Activated CD8-positive, alpha-beta memory T cell treated with anti-CD3 and anti-CD28 coated beads, Interleukin-2, amount 10 ng/mL, durations not matched to agents 7 days and 5 days (primary cell): ENCODE measurements at regions of chr13 and their contacts with region 1.

Region 1: DNA sequence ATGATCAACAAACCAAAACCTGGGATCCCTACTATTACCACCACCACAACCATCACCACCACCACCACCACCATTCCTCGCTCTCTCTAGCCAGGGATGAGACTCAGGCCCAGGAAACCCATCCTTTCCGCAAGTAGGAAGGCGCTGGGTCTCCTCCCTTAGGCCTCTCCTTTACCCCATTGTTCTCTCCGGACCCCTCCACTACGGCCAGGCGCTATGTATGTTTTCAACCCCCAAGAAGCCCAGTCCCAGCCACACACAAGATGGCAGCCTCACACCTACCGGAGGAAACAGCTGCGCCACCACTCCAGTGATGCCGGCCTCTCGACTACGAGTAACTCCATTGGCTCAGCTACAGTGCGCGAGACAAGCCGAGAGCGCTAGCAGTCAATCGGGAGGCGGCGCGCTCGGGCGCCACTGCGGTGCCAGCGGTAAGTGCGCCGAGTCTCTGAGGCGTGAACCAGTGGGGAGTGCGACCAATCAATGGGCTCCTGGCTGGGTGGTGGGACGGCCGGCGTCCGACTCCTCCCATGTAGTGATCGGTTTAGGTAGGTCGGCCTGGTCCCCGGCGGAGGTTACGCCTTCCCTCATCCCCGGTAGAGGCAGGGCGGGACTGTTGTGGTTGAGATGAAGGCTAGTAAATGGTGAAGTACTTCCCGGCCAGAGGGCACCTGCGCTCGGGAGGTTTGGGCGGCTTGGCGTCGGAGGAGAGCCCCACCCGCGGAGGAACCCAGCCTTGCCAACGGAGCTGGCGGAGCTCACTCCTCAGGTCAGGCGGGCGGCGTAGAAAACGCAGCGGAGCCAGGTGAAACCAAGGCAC is at the starts of genes CAB39L and SETDB2:
- DNase-seq: peak; percentile 100
- ATAC-seq: peak; percentile 94
- H3K4me3 Mint-ChIP-seq: peak within 1 kb of the TSS; percentile 97
- H3K27ac Mint-ChIP-seq: peak within 1 kb of the TSS; percentile 98
- H3K4me1 Mint-ChIP-seq: peaks cover 47% of the 10 kb centered on the region
- H3K27me3 Mint-ChIP-seq: no peaks in the 10 kb centered on the region
- total RNA-seq, gene CAB39L: 4.0 to 4.3 TPM
- total RNA-seq, gene SETDB2: 14.3 to 18.0 TPM

Region 2: GRCh38 chr13:48828962-48829421 is 614.9 kb before region 1 on chr13:
- CTCF ChIA-PET with region 1: no interaction called
- DNase-seq: no peak
- ATAC-seq: peak; percentile 47
- H3K4me3 Mint-ChIP-seq: no peak overlapping the region
- H3K27ac Mint-ChIP-seq: no peak overlapping the region
- H3K4me1 Mint-ChIP-seq: peaks cover 21% of the 10 kb centered on the region
- H3K27me3 Mint-ChIP-seq: no peaks in the 10 kb centered on the region

Region 3: GRCh38 chr13:49454388-49455006 is 10.6 kb after region 1 on chr13:
- CTCF ChIA-PET with region 1: interaction called, 23 read pairs
- DNase-seq: no peak
- ATAC-seq: peak; percentile 95
- H3K4me3 Mint-ChIP-seq: peak overlapping the region; percentile 62
- H3K27ac Mint-ChIP-seq: peak overlapping the region; percentile 88
- H3K4me1 Mint-ChIP-seq: peaks cover 45% of the 10 kb centered on the region
- H3K27me3 Mint-ChIP-seq: no peaks in the 10 kb centered on the region

Region 4: GRCh38 chr13:49472186-49472585 is 28.3 kb after region 1 on chr13:
- CTCF ChIA-PET with region 1: no interaction called
- DNase-seq: no peak
- ATAC-seq: no peak
- H3K4me3 Mint-ChIP-seq: no peak overlapping the region
- H3K27ac Mint-ChIP-seq: no peak overlapping the region
- H3K4me1 Mint-ChIP-seq: no peaks in the 10 kb centered on the region
- H3K27me3 Mint-ChIP-seq: no peaks in the 10 kb centered on the region

Region 5: DNA sequence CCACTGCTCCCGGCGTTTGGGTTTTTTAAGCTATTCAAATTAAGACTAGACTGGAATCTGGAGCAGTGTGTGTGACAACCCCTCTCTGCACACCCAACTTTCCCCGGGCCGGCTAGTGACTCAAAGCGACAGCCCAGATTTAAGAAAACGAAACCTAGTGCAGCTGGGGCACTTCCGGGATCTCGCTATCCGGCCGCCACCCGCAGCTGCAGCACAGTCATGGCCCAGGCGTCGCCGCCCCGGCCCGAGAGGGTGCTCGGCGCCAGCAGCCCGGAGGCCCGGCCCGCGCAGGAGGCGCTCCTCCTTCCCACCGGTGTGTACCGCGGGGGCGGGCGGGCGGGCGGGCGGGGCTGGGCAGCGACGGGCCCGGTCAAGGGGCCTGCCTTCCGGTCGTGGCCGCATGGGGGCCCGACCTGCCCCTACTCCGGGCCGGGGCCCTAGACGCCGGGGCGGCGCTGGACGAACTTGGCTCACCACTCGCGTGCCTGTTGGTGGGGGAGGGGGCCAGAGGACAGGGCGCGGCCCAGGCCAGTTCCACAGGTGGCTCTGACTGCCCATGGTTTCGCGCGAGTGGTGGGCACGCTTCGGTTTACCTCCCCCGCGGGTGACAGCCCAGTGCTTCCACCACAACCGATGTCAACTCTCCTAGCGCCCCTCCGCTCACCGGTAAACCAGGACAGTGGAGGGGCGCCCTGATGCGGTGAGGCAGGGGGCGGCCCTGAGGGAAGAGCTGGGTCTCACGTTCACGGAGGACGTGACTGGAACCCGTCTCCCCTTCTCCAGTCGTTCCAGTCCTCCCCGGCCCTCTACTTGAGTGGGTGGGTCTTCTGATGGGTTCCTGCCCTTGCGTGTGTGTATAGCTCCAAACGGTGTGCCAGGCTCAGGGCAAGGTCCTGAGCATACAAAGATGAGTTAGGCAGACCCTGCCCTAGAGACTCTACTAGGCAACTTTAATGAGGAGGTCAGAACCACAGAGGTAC is 52.2 kb after region 1 on chr13 and contains the start of gene PHF11:
- CTCF ChIA-PET with region 1: interaction called, 21 read pairs
- DNase-seq: peak; percentile 92
- ATAC-seq: peak; percentile 87
- H3K4me3 Mint-ChIP-seq: peak within 1 kb of the TSS; percentile 94
- H3K27ac Mint-ChIP-seq: peak within 1 kb of the TSS; percentile 99
- H3K4me1 Mint-ChIP-seq: peaks cover 53% of the 10 kb centered on the region
- H3K27me3 Mint-ChIP-seq: no peaks in the 10 kb centered on the region
- total RNA-seq, gene PHF11: 79.6 to 129 TPM